ENCODE measurements at regions of chr9 and their contacts with region 1.

Region 1: GRCh38 chr9:83538172-83538889 is at the start of gene FRMD3:
- DNase-seq: no peak
- H3K4me3 ChIP-seq: peak within 1 kb of the TSS; percentile 66
- CTCF ChIP-seq: peak; percentile 86

Region 2: DNA sequence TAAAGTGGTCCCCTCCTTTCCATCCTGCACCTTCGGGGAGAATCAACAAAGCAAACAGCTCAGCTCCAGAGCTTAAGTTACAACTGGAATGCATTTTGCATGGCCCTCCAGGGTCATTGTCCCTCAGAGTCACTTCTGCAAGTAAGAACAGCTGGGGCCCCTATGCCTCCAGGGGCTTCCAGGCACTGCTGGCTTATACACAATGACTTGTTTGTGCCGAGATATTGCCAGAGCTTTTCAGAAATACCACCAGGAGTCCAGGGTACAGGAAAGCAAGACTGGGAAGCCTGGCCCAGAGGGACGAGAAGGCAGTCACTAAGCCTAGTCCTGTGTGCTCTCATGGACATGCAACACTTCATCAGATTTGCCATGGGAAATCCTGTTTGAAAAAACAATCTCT is 11.4 kb before region 1 on chr9:
- CTCF ChIA-PET with region 1: interaction called, 27 read pairs
- POLR2A ChIA-PET with region 1: no interaction called
- DNase-seq: no peak
- H3K4me3 ChIP-seq: no peak overlapping the region
- CTCF ChIP-seq: no peak

Region 3: GRCh38 chr9:83554278-83554677 is 15.9 kb after region 1 on chr9:
- CTCF ChIA-PET with region 1: interaction called, 13 read pairs
- POLR2A ChIA-PET with region 1: no interaction called
- DNase-seq: no peak
- H3K4me3 ChIP-seq: no peak overlapping the region
- CTCF ChIP-seq: no peak